ENCODE measurements at regions of chr3 and their contacts with region 1.

Region 1: GRCh38 chr3:184561061-184561912 is at the start of gene EPHB3:
- DNase-seq: peak; percentile 96
- ATAC-seq: peak; percentile 89
- H3K4me3 ChIP-seq: peak within 1 kb of the TSS; percentile 41 to 67 (median 52)
- H3K4me3 Mint-ChIP-seq: peak within 1 kb of the TSS; percentile 88
- H3K27ac ChIP-seq: no peak within 1 kb of the TSS
- H3K27ac Mint-ChIP-seq: no peak within 1 kb of the TSS
- H3K4me1 ChIP-seq: peaks cover 19 to 22% of the 10 kb centered on the region in 2 donors
- H3K4me1 Mint-ChIP-seq: peaks cover 15% of the 10 kb centered on the region
- H3K27me3 ChIP-seq: peaks cover 0 to 53% (median 37%) of the 10 kb centered on the region in 4 experiments
- H3K27me3 Mint-ChIP-seq: peaks cover 35% of the 10 kb centered on the region
- CTCF ChIP-seq: peak; percentile 99
- total RNA-seq, gene EPHB3: 0.07 TPM in 1 of 2 replicates, not detected in the other

Region 2: DNA sequence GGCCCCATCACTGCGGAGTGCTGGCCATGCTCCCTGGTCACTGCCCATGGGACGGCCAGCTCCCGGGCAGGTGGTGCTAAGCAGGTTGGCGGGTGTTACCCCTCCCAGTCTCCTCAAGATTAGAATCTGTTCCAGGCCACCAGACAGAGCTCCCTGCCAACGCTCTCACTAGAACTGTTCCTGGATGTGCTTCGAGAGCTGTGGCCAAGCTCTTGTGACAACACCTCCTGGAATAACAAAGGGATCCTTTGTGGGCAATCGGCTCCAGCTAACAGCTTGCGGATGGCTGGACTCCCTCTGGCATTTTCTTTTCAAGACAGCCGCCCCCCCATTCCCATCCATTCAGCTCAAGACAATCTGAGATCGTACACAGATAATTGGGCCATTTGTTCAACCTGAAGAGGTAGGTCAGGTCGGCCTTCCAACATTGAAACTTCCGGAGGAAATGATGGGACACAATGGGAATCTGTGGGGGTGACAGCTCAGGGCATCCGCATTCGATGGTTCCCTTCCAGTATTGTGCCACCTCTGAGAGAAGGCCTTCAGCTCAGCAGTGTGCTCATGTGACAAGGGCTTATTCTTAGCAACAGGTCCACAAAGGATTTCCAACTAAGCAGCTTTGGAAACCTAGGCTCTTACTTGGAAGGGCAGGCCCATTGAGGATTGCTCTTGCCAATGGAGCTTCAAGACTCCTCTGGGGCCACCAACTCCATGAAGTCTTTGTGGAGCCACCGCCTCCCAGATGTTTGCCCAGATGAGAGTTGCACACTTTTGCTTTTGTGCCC is 11.3 kb before region 1 on chr3:
- CTCF ChIA-PET with region 1: interaction called, 16 read pairs
- POLR2A ChIA-PET with region 1: no interaction called
- intact Hi-C with region 1: no loop called
- DNase-seq: no peak
- ATAC-seq: no peak
- H3K4me3 ChIP-seq: no peak overlapping the region
- H3K4me3 Mint-ChIP-seq: no peak overlapping the region
- H3K27ac ChIP-seq: no peak overlapping the region
- H3K27ac Mint-ChIP-seq: no peak overlapping the region
- H3K4me1 ChIP-seq: peaks cover 0 to 7% of the 10 kb centered on the region in 2 donors
- H3K4me1 Mint-ChIP-seq: peaks cover 6% of the 10 kb centered on the region
- H3K27me3 ChIP-seq: peaks cover 0 to 32% (median 4%) of the 10 kb centered on the region in 4 experiments
- H3K27me3 Mint-ChIP-seq: peaks cover 43% of the 10 kb centered on the region
- CTCF ChIP-seq: no peak

Region 3: DNA sequence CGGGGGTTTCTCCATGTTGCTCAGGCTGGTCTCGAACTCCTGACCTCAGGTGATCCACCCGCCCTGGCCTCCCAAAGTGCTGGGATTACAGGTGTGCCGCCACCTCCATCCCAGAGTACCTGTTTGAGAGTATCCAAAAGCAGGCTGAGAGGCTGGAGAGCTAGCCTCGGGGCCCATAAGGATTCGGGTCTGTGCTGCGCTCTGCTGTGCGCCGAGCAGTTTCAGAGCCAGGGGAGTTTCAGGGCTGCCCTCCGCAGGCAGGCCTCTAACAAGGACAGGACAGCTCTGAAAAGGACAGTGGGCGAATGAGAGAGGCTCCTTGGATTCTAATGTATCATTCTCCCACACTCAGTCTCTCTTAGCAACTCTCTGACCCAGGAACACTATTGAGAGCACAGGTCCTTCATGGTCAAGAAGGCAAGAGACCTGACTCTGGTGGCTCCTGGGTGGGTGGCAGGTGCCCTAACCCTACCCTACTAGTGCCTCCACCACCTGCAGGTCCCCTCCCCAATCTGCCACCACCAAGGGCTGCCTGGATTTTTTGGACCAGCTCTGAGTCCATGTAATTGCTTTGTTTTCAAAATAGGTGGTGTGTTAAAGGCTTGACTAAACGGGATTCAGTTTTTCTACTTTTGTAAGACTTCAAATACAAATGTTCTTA is 122.7 kb after region 1 on chr3:
- CTCF ChIA-PET with region 1: no interaction called
- POLR2A ChIA-PET with region 1: no interaction called
- intact Hi-C with region 1: no loop called
- DNase-seq: no peak
- ATAC-seq: no peak
- H3K4me3 ChIP-seq: no peak overlapping the region
- H3K4me3 Mint-ChIP-seq: no peak overlapping the region
- H3K27ac ChIP-seq: no peak overlapping the region
- H3K27ac Mint-ChIP-seq: peak overlapping the region; percentile 26
- H3K4me1 ChIP-seq: peaks cover 21 to 26% of the 10 kb centered on the region in 2 donors
- H3K4me1 Mint-ChIP-seq: peaks cover 24% of the 10 kb centered on the region
- H3K27me3 ChIP-seq: no peaks in the 10 kb centered on the region
- H3K27me3 Mint-ChIP-seq: no peaks in the 10 kb centered on the region
- CTCF ChIP-seq: no peak

Region 4: DNA sequence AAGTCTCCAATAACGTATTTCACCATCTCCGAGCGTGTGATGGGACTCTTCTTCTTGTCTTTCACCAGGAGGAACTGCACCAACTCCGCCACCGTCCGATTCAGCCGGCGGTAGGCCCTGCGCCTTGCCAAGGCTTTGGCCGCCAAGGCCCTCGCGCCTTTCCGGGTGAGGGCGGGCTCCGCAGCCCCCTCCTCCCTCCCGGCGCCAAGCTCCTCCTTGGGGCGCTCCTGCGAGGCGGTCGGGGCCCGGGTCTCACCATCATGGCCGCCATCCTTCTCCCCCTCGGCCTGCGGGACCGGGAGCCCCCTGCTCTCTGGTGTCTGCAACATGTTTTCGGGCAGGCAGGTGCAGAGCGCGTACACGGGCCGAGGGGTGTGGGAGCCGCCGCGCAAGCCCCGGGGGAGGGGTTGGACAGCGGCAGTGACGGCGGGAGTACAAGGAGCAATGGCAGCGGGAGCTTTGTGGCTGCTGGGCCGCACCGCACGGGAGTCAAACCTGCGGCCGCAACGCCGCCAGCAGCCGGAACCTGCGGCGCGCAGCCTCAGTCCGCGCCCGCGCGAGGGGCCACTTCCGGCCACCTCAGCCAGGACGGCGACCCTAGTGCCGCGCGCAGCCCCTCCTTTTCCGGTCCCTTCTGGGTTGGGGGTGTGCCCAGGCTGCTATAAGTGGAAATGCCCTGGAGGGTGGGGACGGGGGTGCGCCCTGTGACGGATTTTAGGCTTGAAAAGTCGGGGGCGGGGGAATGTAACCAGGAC is 150.4 kb after region 1 on chr3 and contains the start of gene MAGEF1:
- CTCF ChIA-PET with region 1: interaction called, 7 read pairs
- POLR2A ChIA-PET with region 1: no interaction called
- intact Hi-C with region 1: loop called (anchors 1 kb)
- DNase-seq: peak; percentile 73
- ATAC-seq: peak; percentile 81
- H3K4me3 ChIP-seq: peak within 1 kb of the TSS; percentile 72 to 87 (median 77)
- H3K4me3 Mint-ChIP-seq: peak within 1 kb of the TSS; percentile 92
- H3K27ac ChIP-seq: peak within 1 kb of the TSS; percentile 73 to 78
- H3K27ac Mint-ChIP-seq: peak within 1 kb of the TSS; percentile 92
- H3K4me1 ChIP-seq: peaks cover 14 to 29% of the 10 kb centered on the region in 2 donors
- H3K4me1 Mint-ChIP-seq: peaks cover 30% of the 10 kb centered on the region
- H3K27me3 ChIP-seq: no peaks in the 10 kb centered on the region
- H3K27me3 Mint-ChIP-seq: no peaks in the 10 kb centered on the region
- CTCF ChIP-seq: no peak
- total RNA-seq, gene MAGEF1: 26.2 and 27.1 TPM in 2 replicates

Region 5: GRCh38 chr3:184741798-184742675 is 180.8 kb after region 1 on chr3:
- CTCF ChIA-PET with region 1: interaction called, 12 read pairs
- POLR2A ChIA-PET with region 1: no interaction called
- intact Hi-C with region 1: no loop called
- DNase-seq: no peak
- ATAC-seq: no peak
- H3K4me3 ChIP-seq: no peak overlapping the region
- H3K4me3 Mint-ChIP-seq: no peak overlapping the region
- H3K27ac ChIP-seq: no peak overlapping the region
- H3K27ac Mint-ChIP-seq: no peak overlapping the region
- H3K4me1 ChIP-seq: no peaks in the 10 kb centered on the region
- H3K4me1 Mint-ChIP-seq: no peaks in the 10 kb centered on the region
- H3K27me3 ChIP-seq: peaks cover 0 to 3% (median 0%) of the 10 kb centered on the region in 4 experiments
- H3K27me3 Mint-ChIP-seq: peaks cover 6% of the 10 kb centered on the region
- CTCF ChIP-seq: no peak

Region 6: GRCh38 chr3:184811999-184812661 is 250.8 kb after region 1 on chr3 and contains the start of gene VPS8:
- CTCF ChIA-PET with region 1: interaction called, 5 read pairs
- POLR2A ChIA-PET with region 1: no interaction called
- intact Hi-C with region 1: loop called (anchors 1 kb)
- DNase-seq: peak; percentile 98
- ATAC-seq: peak; percentile 94
- H3K4me3 ChIP-seq: peak within 1 kb of the TSS; percentile 77 to 95 (median 92)
- H3K4me3 Mint-ChIP-seq: peak within 1 kb of the TSS; percentile 93
- H3K27ac ChIP-seq: peak within 1 kb of the TSS; percentile 70 to 76
- H3K27ac Mint-ChIP-seq: peak within 1 kb of the TSS; percentile 96
- H3K4me1 ChIP-seq: peaks cover 16 to 18% of the 10 kb centered on the region in 2 donors
- H3K4me1 Mint-ChIP-seq: peaks cover 28% of the 10 kb centered on the region
- H3K27me3 ChIP-seq: no peaks in the 10 kb centered on the region
- H3K27me3 Mint-ChIP-seq: peaks cover 3% of the 10 kb centered on the region
- CTCF ChIP-seq: peak; percentile 46
- total RNA-seq, gene VPS8: 95.6 and 106 TPM in 2 replicates